OCI-LY7 (cell line): ENCODE measurements at regions of chr13 and their contacts with region 1.

Region 1: DNA sequence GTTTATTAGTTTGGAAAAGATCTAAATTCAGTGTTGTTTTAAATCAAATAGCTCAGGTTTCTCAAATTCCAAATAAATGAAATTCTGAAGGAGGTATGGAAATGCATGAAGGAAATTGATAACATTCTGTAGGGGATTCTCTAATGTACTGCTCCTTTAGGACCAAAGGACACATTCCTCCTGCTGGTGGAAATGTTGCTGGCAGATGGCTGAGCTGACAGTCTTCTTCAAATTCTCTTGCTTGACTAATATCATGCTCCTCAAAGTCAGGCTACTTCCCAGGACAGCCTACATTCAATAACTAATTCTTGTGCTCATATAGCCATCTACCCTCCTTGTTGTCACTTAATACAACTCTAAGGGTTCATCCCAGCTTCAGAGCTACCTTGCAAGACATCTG is 1118.5 kb downstream of the PCDH9 start:
- DNase-seq: no peak
- H3K4me3 ChIP-seq: no peak overlapping the region
- H3K27ac ChIP-seq: no peak overlapping the region
- H3K4me1 ChIP-seq: no peaks in the 10 kb centered on the region
- CTCF ChIP-seq: no peak

Region 2: GRCh38 chr13:66087269-66087710 is 24.3 kb before region 1 on chr13:
- CTCF ChIA-PET with region 1: no interaction called
- POLR2A ChIA-PET with region 1: no interaction called
- intact Hi-C with region 1: no loop called
- DNase-seq: no peak
- H3K4me3 ChIP-seq: no peak overlapping the region
- H3K27ac ChIP-seq: no peak overlapping the region
- H3K4me1 ChIP-seq: no peaks in the 10 kb centered on the region
- CTCF ChIP-seq: no peak

Region 3: DNA sequence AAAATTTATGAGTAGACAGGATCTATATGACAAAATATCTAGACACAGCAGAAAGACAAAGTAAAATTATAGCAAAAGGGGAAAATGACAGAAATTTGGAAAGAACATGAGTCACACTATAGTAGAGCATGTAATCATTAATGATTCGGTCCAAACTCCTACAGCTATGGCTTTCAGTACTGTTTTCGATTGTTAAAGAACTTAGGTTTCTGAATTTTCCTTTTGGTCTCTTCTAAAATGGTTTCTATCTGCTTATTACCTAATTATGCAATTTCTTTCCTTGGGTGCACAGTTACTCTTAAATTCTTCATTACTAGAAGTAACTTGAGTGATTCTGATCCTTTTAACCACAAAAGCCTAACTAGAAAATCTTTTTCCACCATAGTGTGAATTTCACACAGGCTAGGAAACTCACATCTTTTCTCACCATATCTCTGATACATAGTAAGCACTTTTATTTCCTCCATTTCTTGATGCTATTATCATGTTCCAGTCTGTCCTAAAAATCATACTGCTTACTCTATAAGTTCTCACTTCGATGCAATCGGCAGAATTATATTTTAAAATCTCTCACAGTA is 17.2 kb after region 1 on chr13:
- CTCF ChIA-PET with region 1: no interaction called
- POLR2A ChIA-PET with region 1: interaction called, 11 read pairs
- intact Hi-C with region 1: no loop called
- DNase-seq: no peak
- H3K4me3 ChIP-seq: no peak overlapping the region
- H3K27ac ChIP-seq: no peak overlapping the region
- H3K4me1 ChIP-seq: no peaks in the 10 kb centered on the region
- CTCF ChIP-seq: no peak